Left colon (tissue), 2 donors: ENCODE measurements at regions of chr20 and their contacts with region 1.

Region 1: GRCh38 chr20:62010551-62011402 is 54.9 kb downstream of the TAF4 start:
- DNase-seq: peak in 1 of 2 donors; percentile 59
- ATAC-seq: peak; percentile 79

Region 2: DNA sequence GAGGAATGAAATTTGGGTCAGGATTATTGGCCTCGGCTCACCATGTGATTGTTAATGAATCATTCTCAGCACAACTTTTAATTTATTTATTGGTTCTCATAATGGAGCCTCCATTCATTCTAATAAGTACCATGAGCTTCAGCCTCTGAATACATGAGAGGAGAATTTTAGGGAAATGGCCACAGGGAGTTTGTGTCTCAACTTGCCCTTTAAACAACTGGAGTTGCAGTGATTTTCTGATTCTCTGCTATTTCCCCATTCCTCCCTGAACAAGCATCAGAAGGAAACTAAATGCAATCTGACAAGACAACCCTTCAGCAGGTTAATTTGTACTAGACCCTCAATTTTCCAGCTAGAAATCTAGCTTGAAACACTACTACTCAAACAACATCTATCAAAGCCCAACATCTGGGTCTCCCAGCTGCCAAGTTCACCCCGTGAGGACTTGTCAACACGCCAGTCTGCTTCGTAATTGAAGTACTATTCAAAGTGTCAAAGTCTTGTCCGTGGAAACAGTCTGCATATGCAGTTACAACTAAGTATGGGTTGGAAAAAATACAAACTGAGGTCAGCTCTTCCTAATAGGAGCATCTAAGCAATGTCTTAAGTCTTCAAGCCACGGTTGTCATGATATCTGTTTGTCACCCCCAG is 523.3 kb before region 1 on chr20:
- intact Hi-C with region 1: no loop called
- DNase-seq: no peak
- ATAC-seq: no peak

Region 3: DNA sequence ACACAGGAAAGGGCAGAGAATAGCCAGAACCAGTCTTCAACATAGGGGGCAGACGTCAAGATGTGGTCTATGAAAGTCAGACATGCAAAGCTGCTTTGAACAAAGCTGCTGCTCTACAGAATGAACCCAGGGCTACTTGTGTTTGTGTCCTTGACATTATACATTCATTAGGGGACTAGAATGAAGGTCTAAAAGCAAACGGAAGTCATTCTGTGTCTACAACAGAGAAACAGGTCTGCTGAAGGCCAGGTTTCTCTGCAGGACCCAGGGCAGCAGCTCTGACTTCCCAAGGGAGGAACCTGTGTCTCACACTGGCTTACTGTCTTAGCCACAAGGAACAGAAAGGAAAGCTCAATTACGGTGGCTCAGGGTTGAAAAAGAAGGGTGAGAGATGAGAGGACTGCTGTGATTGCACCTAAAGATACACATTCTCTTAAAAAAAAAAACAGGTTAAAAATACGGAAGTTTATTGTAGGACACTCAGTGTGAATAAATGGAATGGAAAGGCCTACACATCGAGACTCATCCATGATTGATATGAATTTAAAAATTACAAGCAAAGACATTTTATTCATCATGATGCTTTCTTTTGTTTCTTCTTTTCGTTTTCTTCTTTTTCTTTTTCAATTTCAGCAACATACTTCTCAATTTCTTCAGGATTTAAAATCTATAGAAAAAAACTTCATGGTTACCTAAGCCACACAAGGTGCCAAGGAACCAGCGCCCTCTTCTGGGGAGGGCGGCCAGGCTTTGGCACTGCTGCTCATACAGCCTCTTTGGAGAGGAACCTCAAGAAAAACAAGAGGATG is 125.7 kb after region 1 on chr20:
- intact Hi-C with region 1: loop called in 1 of 2 experiments (anchors 5 kb)
- DNase-seq: peak; percentile 55 to 82
- ATAC-seq: peak; percentile 71

Region 4: GRCh38 chr20:62201173-62202082 is 190.7 kb after region 1 on chr20:
- intact Hi-C with region 1: no loop called
- DNase-seq: no peak
- ATAC-seq: no peak

Region 5: GRCh38 chr20:62386383-62387218 is 375.8 kb after region 1 on chr20 and contains the start of gene RPS21:
- intact Hi-C with region 1: loop called in 1 of 2 experiments (anchors 10 kb)
- DNase-seq: peak; percentile 94
- ATAC-seq: peak; percentile 90
- total RNA-seq, gene RPS21: 1,150 to 1,291 TPM